ENCODE measurements at regions of chr16 and their contacts with region 1.

Region 1: GRCh38 chr16:11915644-11916523 is at the start of gene GSPT1:
- DNase-seq: peak; percentile 95 to 100 (median 98)

Region 2: GRCh38 chr16:10944249-10945064 is 971.4 kb before region 1 on chr16 and contains the start of gene CLEC16A:
- intact Hi-C with region 1: loop called (anchors 5 kb)
- DNase-seq: peak; percentile 96 to 100 (median 99)

Region 3: DNA sequence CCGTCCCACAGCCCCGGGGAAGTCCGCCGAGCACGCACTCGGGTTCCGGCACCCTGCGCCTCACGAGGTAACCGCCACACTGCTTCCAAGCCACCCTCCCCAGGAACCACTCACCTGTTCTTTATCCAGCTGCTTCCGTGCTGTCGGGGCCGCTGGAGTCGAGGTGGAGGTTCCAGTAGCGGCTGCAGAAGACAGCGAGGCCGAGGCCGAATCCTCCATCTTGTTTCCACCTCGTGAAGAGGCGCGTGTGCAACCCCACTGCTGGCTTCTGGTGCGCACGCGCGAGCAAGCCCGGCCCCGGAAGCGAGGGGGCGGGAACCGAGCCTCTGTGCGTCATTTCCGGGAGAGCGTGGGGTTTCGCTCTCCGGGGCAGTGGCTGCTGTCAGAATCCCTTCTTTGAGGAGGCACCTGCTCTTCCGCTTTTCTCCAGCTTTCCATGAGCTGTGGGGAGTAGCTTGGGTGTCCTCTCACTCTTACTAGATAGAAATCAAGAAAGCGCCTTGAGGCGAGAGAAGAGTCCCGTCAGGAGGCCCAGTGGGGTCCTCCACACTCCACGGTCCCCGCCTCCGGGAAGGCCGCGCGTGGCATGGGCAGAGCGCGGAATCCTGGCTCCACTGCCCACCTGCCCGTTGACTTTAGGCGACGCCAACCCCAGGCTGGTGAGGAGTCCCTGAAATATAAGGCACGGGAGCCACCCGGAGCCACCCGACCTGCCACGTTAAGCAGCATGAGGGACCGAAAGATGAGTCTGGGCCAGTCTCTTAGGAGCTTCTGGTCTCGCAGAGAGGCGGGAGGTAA is 64.4 kb before region 1 on chr16 and contains the start of gene RSL1D1:
- intact Hi-C with region 1: loop called (anchors 5 kb)
- DNase-seq: peak; percentile 67 to 95 (median 89)